Activated CD4-positive, alpha-beta T cell treated with anti-CD3 and anti-CD28 coated beads for 36 hours (primary cell): ENCODE measurements at regions of chr3 and their contacts with region 1.

Region 1: GRCh38 chr3:127162947-127163645 is 29.8 kb upstream of the PRR23E start:
- DNase-seq: peak; percentile 17
- ATAC-seq: no peak
- H3K4me3 Mint-ChIP-seq: no peak overlapping the region
- H3K27ac Mint-ChIP-seq: no peak overlapping the region
- H3K4me1 Mint-ChIP-seq: no peaks in the 10 kb centered on the region
- H3K27me3 Mint-ChIP-seq: peaks cover 9% of the 10 kb centered on the region

Region 2: DNA sequence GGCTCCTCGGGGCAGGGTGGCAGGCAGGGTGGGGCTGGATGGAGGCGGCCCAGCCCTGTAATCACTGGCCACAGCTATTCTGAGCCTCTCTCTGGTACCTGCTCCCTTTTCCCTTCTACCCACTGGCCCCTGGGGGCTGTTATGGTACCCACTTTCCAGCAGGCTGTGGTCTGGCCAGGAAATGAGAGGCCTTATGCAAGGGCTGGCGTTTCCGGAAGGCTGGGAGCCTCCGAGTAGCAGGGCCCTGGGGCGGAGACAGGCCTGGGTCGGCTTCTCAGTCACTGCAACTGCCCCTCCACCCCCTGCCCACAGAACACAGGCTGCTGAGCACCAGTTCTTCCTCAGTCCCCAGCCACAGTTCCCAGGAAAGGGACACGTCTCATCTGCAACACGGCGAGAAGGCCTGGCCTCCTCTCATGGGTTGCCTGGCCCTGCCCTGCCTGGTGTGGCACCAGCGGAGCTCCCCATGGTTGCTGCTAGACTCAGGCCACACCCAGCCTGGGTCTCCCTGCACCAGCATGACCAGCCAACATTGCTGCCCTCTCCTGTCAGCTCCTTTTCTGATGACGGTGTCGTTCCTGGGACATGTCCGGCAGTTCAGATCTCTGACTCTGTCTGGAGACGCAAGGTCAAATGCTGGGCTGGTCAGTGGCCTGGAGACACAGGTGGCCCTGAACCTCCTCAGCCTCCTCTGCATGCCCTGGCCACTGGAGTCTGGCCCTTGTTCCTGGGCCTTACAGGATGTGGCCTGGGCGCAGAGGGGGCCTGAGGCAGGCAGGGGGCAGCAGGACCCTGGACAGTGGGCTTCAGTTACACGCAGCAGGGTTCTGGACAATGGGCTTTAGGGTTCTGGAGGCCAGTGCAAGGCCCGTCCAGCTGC is 632.7 kb before region 1 on chr3:
- CTCF ChIA-PET with region 1: no interaction called
- POLR2A ChIA-PET with region 1: no interaction called
- intact Hi-C with region 1: loop called in 1 of 2 experiments (anchors 10 kb)
- DNase-seq: peak; percentile 27
- ATAC-seq: peak; percentile 39
- H3K4me3 Mint-ChIP-seq: no peak overlapping the region
- H3K27ac Mint-ChIP-seq: no peak overlapping the region
- H3K4me1 Mint-ChIP-seq: no peaks in the 10 kb centered on the region
- H3K27me3 Mint-ChIP-seq: peaks cover 5% of the 10 kb centered on the region

Region 3: GRCh38 chr3:127015282-127016042 is 147.6 kb before region 1 on chr3:
- CTCF ChIA-PET with region 1: no interaction called
- POLR2A ChIA-PET with region 1: no interaction called
- intact Hi-C with region 1: no loop called
- DNase-seq: peak; percentile 22
- ATAC-seq: no peak
- H3K4me3 Mint-ChIP-seq: no peak overlapping the region
- H3K27ac Mint-ChIP-seq: no peak overlapping the region
- H3K4me1 Mint-ChIP-seq: no peaks in the 10 kb centered on the region
- H3K27me3 Mint-ChIP-seq: no peaks in the 10 kb centered on the region